Ovary (tissue), 10 donors: ENCODE measurements at regions of chr7 and their contacts with region 1.

Region 1: DNA sequence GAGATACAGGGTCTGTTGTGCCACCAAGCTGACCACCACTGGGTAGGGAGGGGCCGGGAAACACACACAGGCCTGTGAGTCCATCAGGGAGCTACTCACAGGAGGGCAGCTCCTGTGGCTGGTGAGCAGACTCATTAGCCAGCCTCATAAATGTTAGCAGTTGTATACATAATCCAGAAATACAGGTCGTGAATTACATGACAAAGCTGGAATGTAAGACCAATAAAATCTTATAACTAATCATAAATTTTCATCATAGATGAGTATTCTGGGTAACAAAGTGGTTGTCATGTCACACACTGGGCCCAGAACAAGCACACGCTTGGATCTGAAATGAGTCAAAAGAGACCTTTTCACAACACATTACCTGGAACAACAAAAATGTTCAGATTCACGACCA is 642.6 kb upstream of the AUTS2 start:
- DNase-seq: no peak
- H3K4me3 ChIP-seq: no peak overlapping the region
- H3K27ac ChIP-seq: no peak overlapping the region
- H3K4me1 ChIP-seq: no peaks in the 10 kb centered on the region
- H3K27me3 ChIP-seq: no peaks in the 10 kb centered on the region
- CTCF ChIP-seq: no peak
- EP300 ChIP-seq: no peak
- POLR2A ChIP-seq: no peak

Region 2: GRCh38 chr7:69002416-69002815 is 46.8 kb after region 1 on chr7:
- intact Hi-C with region 1: loop called in 1 of 4 experiments (anchors 1 kb)
- DNase-seq: no peak
- H3K4me3 ChIP-seq: no peak overlapping the region
- H3K27ac ChIP-seq: no peak overlapping the region
- H3K4me1 ChIP-seq: no peaks in the 10 kb centered on the region
- H3K27me3 ChIP-seq: no peaks in the 10 kb centered on the region
- CTCF ChIP-seq: no peak
- EP300 ChIP-seq: no peak
- POLR2A ChIP-seq: no peak

Region 3: GRCh38 chr7:69109246-69109645 is 153.6 kb after region 1 on chr7:
- intact Hi-C with region 1: no loop called
- DNase-seq: no peak
- H3K4me3 ChIP-seq: no peak overlapping the region
- H3K27ac ChIP-seq: no peak overlapping the region
- H3K4me1 ChIP-seq: no peaks in the 10 kb centered on the region
- H3K27me3 ChIP-seq: no peaks in the 10 kb centered on the region
- CTCF ChIP-seq: no peak
- EP300 ChIP-seq: no peak
- POLR2A ChIP-seq: no peak

Region 4: GRCh38 chr7:69130396-69130795 is 174.7 kb after region 1 on chr7:
- intact Hi-C with region 1: no loop called
- DNase-seq: no peak
- H3K4me3 ChIP-seq: no peak overlapping the region
- H3K27ac ChIP-seq: no peak overlapping the region
- H3K4me1 ChIP-seq: peaks cover 3% of the 10 kb centered on the region
- H3K27me3 ChIP-seq: no peaks in the 10 kb centered on the region
- CTCF ChIP-seq: no peak
- EP300 ChIP-seq: no peak
- POLR2A ChIP-seq: no peak